Sciatic nerve (tissue), 2 donors: ENCODE measurements at regions of chr18 and their contacts with region 1.

Region 1: DNA sequence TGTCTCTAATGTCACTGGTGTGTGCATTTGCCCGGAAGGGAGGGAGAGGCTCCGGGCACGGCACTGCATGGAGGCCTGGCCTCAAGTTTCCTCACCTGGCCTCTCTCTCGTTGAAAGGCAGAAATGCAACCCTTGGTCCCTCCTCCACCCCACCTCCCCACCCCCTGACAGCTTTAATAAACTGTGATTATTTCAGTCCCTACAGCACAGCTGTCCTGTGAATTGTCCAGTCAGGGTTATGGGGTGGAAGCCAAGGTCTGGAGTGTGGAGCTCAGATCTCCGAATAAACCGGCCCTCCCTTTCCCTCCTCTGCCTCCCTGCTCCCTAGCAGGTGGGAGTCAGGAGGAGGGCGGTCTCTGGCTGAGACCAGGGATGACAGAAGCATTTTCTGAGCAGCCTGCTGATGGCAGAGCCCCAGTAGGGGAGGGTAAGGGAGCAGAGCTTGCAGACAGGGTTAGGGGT is 199.2 kb upstream of the SMAD2 start:
- DNase-seq: no peak
- ATAC-seq: no peak

Region 2: DNA sequence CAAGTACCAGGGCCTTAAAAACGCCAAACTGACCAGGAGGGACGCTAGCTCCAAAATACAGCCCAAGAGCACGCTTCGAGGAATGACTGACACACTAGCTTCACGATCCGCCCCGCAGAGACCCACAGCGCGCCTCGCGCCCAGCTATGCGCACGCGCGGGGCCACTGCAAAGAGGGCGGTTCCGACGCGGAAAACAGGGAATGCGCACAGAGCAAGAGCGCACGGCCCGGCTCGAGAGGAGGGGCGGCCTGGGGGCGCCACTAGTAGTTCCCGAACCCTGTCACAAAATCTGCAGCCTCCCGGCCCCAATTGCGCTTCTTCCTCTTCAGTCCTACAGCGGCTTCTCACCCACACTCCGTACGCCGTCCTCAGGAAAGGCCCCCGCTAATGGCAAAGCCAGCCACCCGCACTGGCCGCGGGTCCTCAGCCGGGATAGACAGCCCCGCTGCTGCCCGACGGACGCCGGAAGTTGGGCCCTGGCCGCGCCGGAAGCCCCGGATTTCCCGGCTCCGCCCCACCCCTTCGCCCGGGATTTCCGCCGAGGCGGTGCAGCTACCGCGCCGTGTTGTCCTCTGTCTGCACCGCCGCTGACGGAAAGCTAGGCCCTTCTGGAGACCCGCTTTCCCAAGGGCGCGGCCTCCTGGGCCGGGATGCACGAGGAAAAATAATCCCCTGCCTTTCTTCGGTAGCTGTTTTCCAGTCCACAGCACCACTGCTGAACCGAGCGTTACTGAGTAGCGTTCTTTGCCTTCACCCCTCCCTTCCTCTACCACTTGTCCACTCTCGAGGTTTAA is 979.4 kb before region 1 on chr18 and contains the start of gene HDHD2:
- intact Hi-C with region 1: loop called (anchors 5 kb)
- DNase-seq: peak; percentile 91
- ATAC-seq: peak; percentile 98
- total RNA-seq, gene HDHD2: 42.7 TPM

Region 3: GRCh38 chr18:48345596-48345995 is 215.9 kb after region 1 on chr18:
- intact Hi-C with region 1: no loop called
- DNase-seq: no peak
- ATAC-seq: no peak